Mammary epithelial cell (primary cell): ENCODE measurements at regions of chr13 and their contacts with region 1.

Region 1: GRCh38 chr13:44312898-44313551 is 60.6 kb upstream of the SERP2 start:
- DNase-seq: peak; percentile 98
- H3K4me3 ChIP-seq: peak overlapping the region in 1 of 3 experiments; percentile 15
- H3K27ac ChIP-seq: peak overlapping the region; percentile 99
- H3K4me1 ChIP-seq: peaks cover 62% of the 10 kb centered on the region
- H3K27me3 ChIP-seq: no peaks in the 10 kb centered on the region
- CTCF ChIP-seq: no peak

Region 2: GRCh38 chr13:43822969-43823368 is 490.1 kb before region 1 on chr13:
- CTCF ChIA-PET with region 1: no interaction called
- dilution Hi-C with region 1: no loop called
- in situ Hi-C with region 1: no loop called
- intact Hi-C with region 1: no loop called
- DNase-seq: peak; percentile 47
- H3K4me3 ChIP-seq: no peak overlapping the region
- H3K27ac ChIP-seq: no peak overlapping the region
- H3K4me1 ChIP-seq: peaks cover 13% of the 10 kb centered on the region
- H3K27me3 ChIP-seq: no peaks in the 10 kb centered on the region
- CTCF ChIP-seq: no peak

Region 3: GRCh38 chr13:43905435-43906031 is 407.5 kb before region 1 on chr13:
- CTCF ChIA-PET with region 1: no interaction called
- dilution Hi-C with region 1: no loop called
- in situ Hi-C with region 1: no loop called
- intact Hi-C with region 1: loop called (anchors 5 kb)
- DNase-seq: peak; percentile 48
- H3K4me3 ChIP-seq: no peak overlapping the region
- H3K27ac ChIP-seq: no peak overlapping the region
- H3K4me1 ChIP-seq: peaks cover 3% of the 10 kb centered on the region
- H3K27me3 ChIP-seq: no peaks in the 10 kb centered on the region
- CTCF ChIP-seq: peak; percentile 62 to 79

Region 4: GRCh38 chr13:44155422-44156293 is 157.4 kb before region 1 on chr13:
- CTCF ChIA-PET with region 1: no interaction called
- dilution Hi-C with region 1: loop called (anchors 5 kb)
- in situ Hi-C with region 1: no loop called
- intact Hi-C with region 1: loop called (anchors 1 kb)
- DNase-seq: no peak
- H3K4me3 ChIP-seq: no peak overlapping the region
- H3K27ac ChIP-seq: no peak overlapping the region
- H3K4me1 ChIP-seq: peaks cover 28% of the 10 kb centered on the region
- H3K27me3 ChIP-seq: no peaks in the 10 kb centered on the region
- CTCF ChIP-seq: no peak

Region 5: DNA sequence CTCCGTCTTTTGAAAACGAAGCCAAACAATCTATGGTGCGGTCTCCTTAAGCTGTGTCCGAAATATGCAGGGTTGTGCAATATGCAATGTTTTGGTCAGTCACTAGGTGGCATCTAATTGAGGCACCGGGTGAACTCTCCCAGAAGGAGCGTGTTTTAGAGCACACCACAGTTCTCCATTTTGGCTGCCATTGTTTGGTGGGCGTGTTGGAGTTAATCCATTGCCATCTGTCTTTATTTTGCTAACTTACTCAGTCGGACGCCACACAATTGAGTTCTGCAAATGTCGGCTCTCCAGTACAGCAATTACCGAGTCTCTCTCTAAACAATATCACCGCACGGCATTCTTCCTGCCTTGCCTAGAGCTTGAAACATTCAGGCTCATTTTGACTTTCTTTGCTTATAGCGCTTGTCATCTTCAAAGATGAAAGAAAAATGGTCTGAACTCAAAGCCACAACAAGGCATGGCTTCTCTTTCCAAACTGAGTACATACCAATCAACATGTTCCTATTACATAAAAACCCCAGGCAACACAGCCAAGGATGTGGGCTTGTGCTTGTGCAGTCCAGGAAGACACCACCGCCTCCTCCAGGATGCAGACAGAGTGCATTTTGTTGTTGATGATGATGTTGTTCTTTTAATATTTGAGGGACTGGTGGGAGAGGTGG is 121.4 kb before region 1 on chr13:
- CTCF ChIA-PET with region 1: no interaction called
- dilution Hi-C with region 1: no loop called
- in situ Hi-C with region 1: no loop called
- intact Hi-C with region 1: loop called (anchors 2 kb)
- DNase-seq: peak; percentile 70
- H3K4me3 ChIP-seq: no peak overlapping the region
- H3K27ac ChIP-seq: no peak overlapping the region
- H3K4me1 ChIP-seq: peaks cover 26% of the 10 kb centered on the region
- H3K27me3 ChIP-seq: no peaks in the 10 kb centered on the region
- CTCF ChIP-seq: peak; percentile 53 to 62

Region 6: GRCh38 chr13:44237276-44237767 is 75.7 kb before region 1 on chr13:
- CTCF ChIA-PET with region 1: no interaction called
- dilution Hi-C with region 1: loop called (anchors 5 kb)
- in situ Hi-C with region 1: loop called in 1 of 2 experiments (anchors 10 kb)
- intact Hi-C with region 1: loop called (anchors 1 kb)
- DNase-seq: peak; percentile 89
- H3K4me3 ChIP-seq: no peak overlapping the region
- H3K27ac ChIP-seq: peak overlapping the region; percentile 35
- H3K4me1 ChIP-seq: peaks cover 22% of the 10 kb centered on the region
- H3K27me3 ChIP-seq: no peaks in the 10 kb centered on the region
- CTCF ChIP-seq: no peak

Region 7: DNA sequence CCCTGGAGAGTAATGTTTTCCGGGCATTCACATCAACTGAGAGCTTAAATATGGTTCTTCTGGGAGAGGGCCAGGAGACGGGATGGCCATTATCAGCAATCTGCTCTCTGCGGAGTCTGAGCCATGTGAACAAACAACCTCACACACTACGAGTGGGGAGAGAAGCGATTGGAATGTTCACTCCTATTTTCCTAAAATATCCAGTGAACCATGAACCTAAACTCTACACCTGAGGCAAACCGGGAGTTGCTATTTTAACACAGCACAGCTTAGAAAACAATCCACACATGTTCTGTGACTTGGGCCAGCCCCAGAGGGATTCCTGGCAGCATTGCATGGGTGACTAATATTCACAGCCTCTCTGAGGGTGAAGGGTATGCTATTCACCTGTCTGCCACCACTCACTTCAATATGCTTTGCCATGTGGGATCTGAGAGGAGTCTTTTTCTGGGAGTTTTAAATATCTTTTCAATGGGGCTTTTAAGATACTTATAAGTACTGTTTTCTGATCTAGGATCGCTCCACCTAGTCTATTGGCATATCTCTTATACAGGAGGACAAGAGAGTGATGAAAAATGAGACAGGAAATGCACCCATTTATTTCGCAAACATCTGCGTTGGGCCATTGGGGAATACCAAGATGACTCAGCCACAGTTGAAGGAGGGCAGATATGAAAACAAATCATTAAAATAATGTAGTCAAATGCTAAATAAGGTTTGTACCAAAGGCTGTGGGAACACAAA is 12.0 kb before region 1 on chr13:
- CTCF ChIA-PET with region 1: no interaction called
- dilution Hi-C with region 1: no loop called
- in situ Hi-C with region 1: no loop called
- intact Hi-C with region 1: loop called (anchors 1 kb)
- DNase-seq: peak; percentile 92
- H3K4me3 ChIP-seq: no peak overlapping the region
- H3K27ac ChIP-seq: peak overlapping the region; percentile 84
- H3K4me1 ChIP-seq: peaks cover 38% of the 10 kb centered on the region
- H3K27me3 ChIP-seq: no peaks in the 10 kb centered on the region
- CTCF ChIP-seq: peak in 1 of 2 donors; percentile 5

Region 8: GRCh38 chr13:44435142-44435982 is 122.3 kb after region 1 on chr13:
- CTCF ChIA-PET with region 1: no interaction called
- dilution Hi-C with region 1: loop called (anchors 5 kb)
- in situ Hi-C with region 1: loop called in 1 of 2 experiments (anchors 5 kb)
- intact Hi-C with region 1: loop called (anchors 1 kb)
- DNase-seq: peak; percentile 97
- H3K4me3 ChIP-seq: peak overlapping the region; percentile 71 to 91 (median 88)
- H3K27ac ChIP-seq: peak overlapping the region; percentile 97
- H3K4me1 ChIP-seq: peaks cover 19% of the 10 kb centered on the region
- H3K27me3 ChIP-seq: no peaks in the 10 kb centered on the region
- CTCF ChIP-seq: no peak